Activated CD4-positive, alpha-beta T cell treated with anti-CD3 and anti-CD28 coated beads for 36 hours (primary cell): ENCODE measurements at regions of chr10 and their contacts with region 1.

Region 1: DNA sequence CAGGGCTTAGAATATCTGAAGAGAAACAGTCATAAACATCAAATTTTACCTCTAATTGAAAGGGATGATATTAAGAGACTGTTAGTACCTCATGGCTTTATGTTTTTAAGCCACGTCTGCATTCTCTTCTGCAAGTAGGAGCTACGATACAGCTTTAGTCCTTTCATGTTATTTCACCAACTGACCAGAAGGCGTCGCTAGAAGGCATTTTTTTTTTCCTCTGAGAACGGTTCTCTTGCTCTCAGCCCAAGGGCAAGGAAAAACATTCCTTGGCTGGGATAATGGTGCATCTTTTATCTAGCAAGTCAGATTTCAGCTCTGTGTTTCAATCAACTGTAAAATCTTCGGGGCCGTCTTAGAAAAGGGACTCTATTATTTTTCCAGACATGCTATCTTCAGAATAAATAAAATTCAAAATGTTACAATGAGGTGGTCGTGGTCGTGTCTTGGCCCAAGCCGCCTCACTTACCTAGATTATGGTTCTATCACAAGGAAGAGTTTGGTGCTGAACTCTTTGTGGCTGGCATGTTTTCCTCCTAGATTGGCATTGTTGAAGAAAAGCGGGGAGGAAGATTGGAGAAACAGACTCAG is 41.6 kb upstream of the LYZL2 start:
- DNase-seq: peak; percentile 47
- ATAC-seq: peak; percentile 74
- H3K4me3 Mint-ChIP-seq: peak overlapping the region; percentile 27
- H3K27ac Mint-ChIP-seq: no peak overlapping the region
- H3K4me1 Mint-ChIP-seq: peaks cover 26% of the 10 kb centered on the region
- H3K27me3 Mint-ChIP-seq: peaks cover 11% of the 10 kb centered on the region

Region 2: GRCh38 chr10:29517352-29517923 is 1153.7 kb before region 1 on chr10:
- CTCF ChIA-PET with region 1: interaction called, 5 read pairs
- POLR2A ChIA-PET with region 1: no interaction called
- intact Hi-C with region 1: loop called in 1 of 2 experiments (anchors 5 kb)
- DNase-seq: peak; percentile 26
- ATAC-seq: no peak
- H3K4me3 Mint-ChIP-seq: no peak overlapping the region
- H3K27ac Mint-ChIP-seq: no peak overlapping the region
- H3K4me1 Mint-ChIP-seq: no peaks in the 10 kb centered on the region
- H3K27me3 Mint-ChIP-seq: no peaks in the 10 kb centered on the region

Region 3: GRCh38 chr10:30656233-30656632 is 14.9 kb before region 1 on chr10:
- CTCF ChIA-PET with region 1: interaction called, 32 read pairs
- POLR2A ChIA-PET with region 1: no interaction called
- intact Hi-C with region 1: no loop called
- DNase-seq: no peak
- ATAC-seq: no peak
- H3K4me3 Mint-ChIP-seq: no peak overlapping the region
- H3K27ac Mint-ChIP-seq: no peak overlapping the region
- H3K4me1 Mint-ChIP-seq: peaks cover 8% of the 10 kb centered on the region
- H3K27me3 Mint-ChIP-seq: peaks cover 31% of the 10 kb centered on the region

Region 4: GRCh38 chr10:30687698-30688219 is 16.6 kb after region 1 on chr10:
- CTCF ChIA-PET with region 1: interaction called, 39 read pairs
- POLR2A ChIA-PET with region 1: interaction called, 4 read pairs
- intact Hi-C with region 1: no loop called
- DNase-seq: peak; percentile 90
- ATAC-seq: peak; percentile 58
- H3K4me3 Mint-ChIP-seq: peak overlapping the region; percentile 43
- H3K27ac Mint-ChIP-seq: peak overlapping the region; percentile 75
- H3K4me1 Mint-ChIP-seq: peaks cover 70% of the 10 kb centered on the region
- H3K27me3 Mint-ChIP-seq: peaks cover 13% of the 10 kb centered on the region

Region 5: DNA sequence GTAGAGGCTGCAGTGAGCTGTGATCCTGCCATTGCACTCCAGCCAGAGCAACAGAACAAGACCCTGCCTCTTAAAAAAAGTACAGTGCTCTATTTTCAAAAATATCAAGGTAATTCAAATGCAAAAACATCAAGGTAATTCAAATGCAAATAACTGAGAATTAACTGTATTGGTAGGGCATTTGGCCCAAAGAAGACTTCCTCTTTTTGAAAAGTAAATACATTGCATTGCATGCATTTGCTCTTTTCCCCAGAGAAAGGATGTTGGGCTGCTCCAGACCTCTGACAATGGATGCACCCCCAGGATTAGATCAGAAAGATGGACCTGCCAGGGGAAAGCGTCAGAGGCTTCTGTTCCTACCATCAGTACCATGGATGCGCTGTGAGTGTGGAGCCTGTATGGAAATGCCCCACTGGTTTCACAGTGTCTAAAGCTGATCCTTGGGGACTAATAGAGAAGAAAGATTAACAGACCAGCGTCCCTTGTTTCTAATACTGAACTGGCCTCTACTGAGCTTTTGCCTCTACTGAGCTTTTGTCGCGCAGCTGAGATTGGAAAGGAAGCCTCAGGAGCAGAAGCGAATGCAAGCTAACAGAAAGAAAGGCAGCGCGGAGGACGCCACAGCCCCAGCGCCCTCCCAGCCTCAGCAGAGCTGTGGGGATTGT is 52.0 kb after region 1 on chr10:
- CTCF ChIA-PET with region 1: interaction called, 30 read pairs
- POLR2A ChIA-PET with region 1: no interaction called
- intact Hi-C with region 1: loop called (anchors 1 to 5 kb)
- DNase-seq: no peak
- ATAC-seq: no peak
- H3K4me3 Mint-ChIP-seq: no peak overlapping the region
- H3K27ac Mint-ChIP-seq: no peak overlapping the region
- H3K4me1 Mint-ChIP-seq: peaks cover 4% of the 10 kb centered on the region
- H3K27me3 Mint-ChIP-seq: no peaks in the 10 kb centered on the region

Region 6: GRCh38 chr10:30732671-30733070 is 61.5 kb after region 1 on chr10:
- CTCF ChIA-PET with region 1: interaction called, 11 read pairs
- POLR2A ChIA-PET with region 1: no interaction called
- intact Hi-C with region 1: no loop called
- DNase-seq: no peak
- ATAC-seq: no peak
- H3K4me3 Mint-ChIP-seq: no peak overlapping the region
- H3K27ac Mint-ChIP-seq: no peak overlapping the region
- H3K4me1 Mint-ChIP-seq: peaks cover 3% of the 10 kb centered on the region
- H3K27me3 Mint-ChIP-seq: peaks cover 2% of the 10 kb centered on the region

Region 7: GRCh38 chr10:31808258-31809218 is 1137.4 kb after region 1 on chr10:
- CTCF ChIA-PET with region 1: interaction called, 3 read pairs
- POLR2A ChIA-PET with region 1: no interaction called
- intact Hi-C with region 1: loop called in 1 of 2 experiments (anchors 2 kb)
- DNase-seq: peak; percentile 28
- ATAC-seq: peak; percentile 51
- H3K4me3 Mint-ChIP-seq: peak overlapping the region; percentile 22
- H3K27ac Mint-ChIP-seq: peak overlapping the region; percentile 91
- H3K4me1 Mint-ChIP-seq: peaks cover 7% of the 10 kb centered on the region
- H3K27me3 Mint-ChIP-seq: no peaks in the 10 kb centered on the region